ENCODE measurements at regions of chr3 and their contacts with region 1.

Region 1: GRCh38 chr3:19866751-19867347 is 67.2 kb downstream of the EFHB start:
- DNase-seq: no peak
- H3K4me3 ChIP-seq: no peak overlapping the region
- H3K27ac ChIP-seq: no peak overlapping the region
- H3K4me1 ChIP-seq: peaks cover 5% of the 10 kb centered on the region
- H3K27me3 ChIP-seq: peaks cover 5% of the 10 kb centered on the region
- CTCF ChIP-seq: peak; percentile 81

Region 2: GRCh38 chr3:19065027-19065426 is 801.8 kb before region 1 on chr3:
- intact Hi-C with region 1: loop called (anchors 10 kb)
- DNase-seq: no peak
- H3K4me3 ChIP-seq: no peak overlapping the region
- H3K27ac ChIP-seq: no peak overlapping the region
- H3K4me1 ChIP-seq: no peaks in the 10 kb centered on the region
- H3K27me3 ChIP-seq: no peaks in the 10 kb centered on the region
- CTCF ChIP-seq: peak; percentile 41

Region 3: DNA sequence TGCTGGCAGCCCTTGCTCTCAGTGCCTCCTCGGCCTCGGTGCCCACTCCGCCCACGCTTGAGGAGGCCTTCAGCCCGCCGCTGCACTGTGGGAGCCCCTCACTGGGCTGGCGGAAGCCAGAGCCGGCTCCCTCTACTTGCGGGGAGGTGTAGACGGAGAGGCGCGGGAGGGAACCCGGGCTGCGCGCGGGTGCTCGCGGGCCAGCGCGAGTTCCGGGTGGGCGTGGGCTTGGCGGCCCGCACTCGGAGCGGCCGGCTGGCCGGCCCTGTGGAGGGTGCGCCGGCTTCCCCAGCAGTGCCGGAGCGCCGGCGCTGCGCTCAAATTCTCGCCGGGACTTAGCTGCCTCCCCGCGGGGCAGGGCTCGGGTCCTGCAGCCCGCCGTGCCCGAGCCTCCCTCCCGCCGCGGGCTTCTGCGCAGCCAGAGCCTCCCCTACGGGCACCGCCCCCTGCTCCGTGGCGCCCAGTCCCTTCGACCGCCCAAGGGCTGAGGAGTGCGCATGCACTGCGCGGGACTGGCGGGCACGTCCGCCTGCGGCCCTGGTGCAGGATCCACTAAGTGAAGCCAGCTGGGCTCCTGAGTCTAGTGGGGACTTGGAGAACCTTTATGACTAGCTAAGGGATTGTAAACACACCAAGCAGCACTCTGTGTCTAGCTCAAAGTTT is 164.3 kb before region 1 on chr3:
- intact Hi-C with region 1: no loop called
- DNase-seq: no peak
- H3K4me3 ChIP-seq: peak overlapping the region; percentile 45
- H3K27ac ChIP-seq: no peak overlapping the region
- H3K4me1 ChIP-seq: no peaks in the 10 kb centered on the region
- H3K27me3 ChIP-seq: no peaks in the 10 kb centered on the region
- CTCF ChIP-seq: no peak

Region 4: GRCh38 chr3:20013396-20013795 is 146.5 kb after region 1 on chr3:
- intact Hi-C with region 1: no loop called
- DNase-seq: no peak
- H3K4me3 ChIP-seq: no peak overlapping the region
- H3K27ac ChIP-seq: no peak overlapping the region
- H3K4me1 ChIP-seq: no peaks in the 10 kb centered on the region
- H3K27me3 ChIP-seq: no peaks in the 10 kb centered on the region
- CTCF ChIP-seq: no peak

Region 5: GRCh38 chr3:20185701-20186598 is 319.1 kb after region 1 on chr3 and contains the start of gene SGO1:
- intact Hi-C with region 1: no loop called
- DNase-seq: peak; percentile 100
- H3K4me3 ChIP-seq: peak within 1 kb of the TSS; percentile 73
- H3K27ac ChIP-seq: peak within 1 kb of the TSS; percentile 93
- H3K4me1 ChIP-seq: peaks cover 34% of the 10 kb centered on the region
- H3K27me3 ChIP-seq: no peaks in the 10 kb centered on the region
- CTCF ChIP-seq: no peak
- total RNA-seq, gene SGO1: 0.38 TPM

Measured in left ventricle myocardium inferior (tissue), 1 donor.